ENCODE measurements at regions of chr1 and their contacts with region 1.

Region 1: DNA sequence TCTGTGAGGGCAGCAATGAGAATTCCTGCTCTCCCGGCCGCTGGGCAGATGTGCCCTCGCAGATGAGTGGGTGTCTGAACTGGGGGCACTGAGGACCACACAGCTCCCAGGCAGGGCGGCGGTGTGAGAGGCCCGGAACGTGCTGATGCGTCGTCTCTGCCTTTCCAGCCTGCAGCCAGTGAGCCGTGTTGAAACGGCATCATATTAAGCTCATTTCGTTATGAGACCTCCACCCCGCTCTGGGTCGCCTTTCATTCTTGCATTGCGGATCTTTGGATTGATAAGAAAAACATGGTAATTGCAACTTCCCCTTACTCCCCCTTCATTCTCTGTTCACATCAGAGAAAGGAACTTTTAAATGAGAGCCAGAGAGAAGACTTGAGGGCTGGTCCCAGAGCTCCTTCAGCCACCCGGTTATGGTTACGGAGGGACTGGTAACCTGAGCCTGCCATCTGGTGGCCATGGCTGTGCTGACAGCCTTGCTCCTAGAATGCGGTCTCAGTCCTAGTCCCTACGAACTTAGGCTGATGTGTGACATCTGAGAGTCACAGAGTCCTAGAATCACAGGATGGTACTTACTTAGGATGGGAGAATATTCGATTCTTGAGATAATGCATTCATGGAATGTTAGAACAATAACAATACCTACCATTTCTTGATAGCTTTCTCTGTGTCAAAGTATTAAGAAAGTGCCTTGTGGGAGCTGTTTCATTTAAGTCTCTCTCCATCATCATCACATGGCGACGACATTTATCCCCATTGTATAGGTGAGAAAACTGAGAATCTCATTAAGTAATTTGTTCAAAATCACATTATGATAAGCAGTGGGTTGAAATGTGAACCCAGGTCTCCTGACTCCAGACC is 271.0 kb downstream of the TRABD2B start:
- DNase-seq: peak in 1 of 2 donors; percentile 89
- H3K4me3 ChIP-seq: peak overlapping the region; percentile 28 to 51
- H3K27ac ChIP-seq: no peak overlapping the region
- H3K4me1 ChIP-seq: peaks cover 7 to 15% of the 10 kb centered on the region in 2 donors
- H3K27me3 ChIP-seq: no peaks in the 10 kb centered on the region
- CTCF ChIP-seq: peak; percentile 75 to 85 (median 83)

Region 2: DNA sequence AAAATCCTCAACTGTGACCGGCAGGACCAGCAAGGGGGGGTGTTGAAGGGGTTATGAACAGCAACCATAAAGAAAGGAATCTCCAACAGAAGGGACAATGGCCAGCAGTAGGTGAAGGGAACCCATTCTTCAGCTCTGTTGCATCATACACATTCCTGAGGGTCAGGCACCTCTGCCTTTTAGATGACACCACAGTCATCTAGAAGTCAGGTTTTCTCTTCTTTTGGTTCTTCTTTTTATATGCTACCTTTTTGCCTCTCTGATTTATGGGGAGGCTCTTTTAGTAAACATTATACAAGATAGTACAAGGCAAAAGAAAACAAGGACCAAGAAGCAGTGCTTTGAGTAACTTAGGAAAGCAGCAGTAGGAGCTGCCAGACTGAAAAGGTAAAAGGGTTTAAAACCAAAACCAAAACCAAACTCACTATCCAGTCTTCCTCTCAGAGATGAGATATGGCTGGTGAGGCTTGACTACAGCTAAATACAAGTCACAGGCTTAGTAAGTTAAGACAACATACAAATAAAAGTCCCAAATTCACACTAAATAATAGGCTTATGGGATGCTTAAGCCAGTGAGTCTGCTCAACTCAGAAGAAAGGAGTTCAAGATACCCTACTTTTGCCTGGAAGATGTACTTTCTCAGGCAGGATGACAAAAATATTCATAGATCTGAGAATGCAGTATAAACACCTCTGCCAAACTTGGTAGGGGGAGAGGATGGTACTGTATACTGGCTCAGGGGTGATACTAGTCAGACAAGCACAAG is 1050.5 kb before region 1 on chr1:
- intact Hi-C with region 1: no loop called
- DNase-seq: no peak
- H3K4me3 ChIP-seq: no peak overlapping the region
- H3K27ac ChIP-seq: no peak overlapping the region
- H3K4me1 ChIP-seq: no peaks in the 10 kb centered on the region
- H3K27me3 ChIP-seq: no peaks in the 10 kb centered on the region
- CTCF ChIP-seq: no peak

Region 3: DNA sequence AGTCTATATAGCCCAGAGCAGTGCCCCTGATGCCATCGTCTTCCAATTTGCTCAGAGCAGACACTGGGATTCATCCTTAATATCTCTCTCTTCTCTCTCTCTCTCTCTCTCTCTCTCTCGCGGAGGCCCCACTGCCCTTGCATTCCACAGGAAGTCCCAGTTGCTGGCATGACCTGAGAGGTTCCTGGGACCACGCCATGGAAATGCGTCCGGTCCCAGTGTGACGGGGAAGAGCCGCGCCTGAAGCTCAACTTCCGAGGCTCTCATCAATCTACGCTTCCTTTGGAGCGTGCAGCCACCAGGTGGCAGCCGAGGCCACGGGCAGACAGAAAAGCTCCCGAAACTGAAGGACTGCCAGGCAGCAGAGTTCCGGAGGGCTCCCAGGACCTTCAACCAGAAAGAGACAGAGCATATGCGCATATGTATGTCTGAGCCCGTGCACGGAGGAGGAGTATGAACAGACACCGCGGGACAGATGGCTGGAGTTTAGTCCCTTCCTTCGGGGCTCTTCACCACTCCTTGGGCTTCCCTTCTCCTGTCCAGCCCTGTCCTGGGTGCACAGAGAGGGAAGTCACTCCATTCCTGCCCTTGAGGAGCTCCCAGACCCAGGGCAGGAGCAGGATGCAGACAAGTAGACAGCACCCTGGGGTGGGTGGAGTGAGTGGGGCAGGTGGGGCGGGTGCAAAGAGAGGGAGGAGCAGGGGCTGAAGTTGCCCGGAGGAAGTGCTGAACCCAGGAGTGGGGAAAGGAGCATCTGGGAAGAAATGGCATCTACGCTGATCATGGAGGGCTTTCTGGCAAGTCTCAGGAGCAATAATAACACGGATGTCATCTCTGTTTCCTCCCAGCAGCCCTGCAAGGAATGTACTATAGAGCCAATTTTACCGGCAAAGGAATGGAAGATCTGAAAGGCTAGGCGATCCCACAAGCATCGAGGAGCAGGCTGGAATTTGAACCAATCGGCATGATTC is 546.9 kb before region 1 on chr1:
- intact Hi-C with region 1: loop called (anchors 5 kb)
- DNase-seq: peak; percentile 36 to 96
- H3K4me3 ChIP-seq: peak overlapping the region; percentile 42 to 62
- H3K27ac ChIP-seq: peak overlapping the region in 1 of 2 donors; percentile 12
- H3K4me1 ChIP-seq: peaks cover 0 to 12% of the 10 kb centered on the region in 2 donors
- H3K27me3 ChIP-seq: no peaks in the 10 kb centered on the region
- CTCF ChIP-seq: peak; percentile 85 to 94 (median 89)

Region 4: DNA sequence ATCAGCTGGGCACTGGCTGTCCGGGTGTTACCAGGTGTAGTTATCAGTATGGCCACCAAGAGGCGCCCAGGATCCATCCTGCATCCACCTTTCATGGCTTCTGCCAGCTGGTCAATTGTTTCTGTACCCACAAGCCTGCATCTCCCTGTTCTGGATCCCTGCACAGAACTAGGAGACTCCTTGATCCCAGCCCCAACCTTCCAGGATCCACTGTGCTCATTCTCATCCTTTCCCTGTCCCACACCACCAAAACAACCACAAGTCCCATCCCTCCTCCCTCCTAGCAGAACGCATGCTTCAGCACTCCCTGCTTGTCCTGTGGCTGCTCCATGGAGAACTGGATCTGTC is 337.4 kb before region 1 on chr1:
- intact Hi-C with region 1: loop called (anchors 2 kb)
- DNase-seq: peak in 1 of 2 donors; percentile 74
- H3K4me3 ChIP-seq: no peak overlapping the region
- H3K27ac ChIP-seq: no peak overlapping the region
- H3K4me1 ChIP-seq: no peaks in the 10 kb centered on the region
- H3K27me3 ChIP-seq: no peaks in the 10 kb centered on the region
- CTCF ChIP-seq: peak; percentile 60 to 75 (median 62)

Region 5: GRCh38 chr1:47432071-47433036 is 293.9 kb before region 1 on chr1:
- intact Hi-C with region 1: loop called (anchors 1 kb)
- DNase-seq: peak in 1 of 2 donors; percentile 89
- H3K4me3 ChIP-seq: peak overlapping the region in 1 of 2 donors; percentile 39
- H3K27ac ChIP-seq: no peak overlapping the region
- H3K4me1 ChIP-seq: peaks cover 9 to 39% of the 10 kb centered on the region in 2 donors
- H3K27me3 ChIP-seq: no peaks in the 10 kb centered on the region
- CTCF ChIP-seq: peak; percentile 52 to 72 (median 72)

Measured in ascending aorta (tissue), 2 donors.